ENCODE measurements at regions of chr5 and their contacts with region 1.

Region 1: DNA sequence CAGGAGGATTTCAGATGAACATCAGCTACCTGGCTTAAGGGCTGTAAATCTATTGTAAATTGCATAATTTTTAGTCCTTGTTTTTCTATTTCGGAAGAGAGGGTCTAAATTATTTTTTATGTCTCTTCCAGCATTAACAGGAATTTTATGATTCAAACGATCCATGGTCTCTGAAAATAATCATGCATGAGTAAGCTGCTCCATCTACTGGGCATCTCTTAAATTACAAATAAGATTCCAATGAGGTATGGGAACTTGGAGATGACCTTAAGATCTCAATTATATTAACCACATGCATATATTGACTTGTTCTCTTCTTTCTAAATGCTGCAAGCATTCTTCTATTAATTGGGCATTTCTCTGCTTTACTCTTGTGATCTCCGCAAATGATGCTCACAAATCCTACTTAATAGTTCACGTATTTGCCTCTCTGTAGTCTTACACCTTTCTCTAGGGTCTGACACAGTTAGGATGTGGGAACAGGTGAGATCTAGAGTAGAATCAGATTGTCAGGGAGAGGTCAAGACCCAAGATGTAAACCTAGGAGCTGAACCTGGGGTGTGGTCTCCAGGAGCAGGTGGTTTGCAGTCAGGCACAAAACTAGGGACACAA is 86.9 kb downstream of the NUDT12 start:
- DNase-seq: peak in 2 of 9 experiments; percentile 33 to 44
- ATAC-seq: no peak
- H3K4me3 ChIP-seq: no peak overlapping the region
- H3K4me3 Mint-ChIP-seq: no peak overlapping the region
- H3K27ac ChIP-seq: no peak overlapping the region
- H3K27ac Mint-ChIP-seq: no peak overlapping the region
- H3K4me1 ChIP-seq: no peaks in the 10 kb centered on the region
- H3K4me1 Mint-ChIP-seq: no peaks in the 10 kb centered on the region
- H3K27me3 ChIP-seq: no peaks in the 10 kb centered on the region
- H3K27me3 Mint-ChIP-seq: peaks cover 11% of the 10 kb centered on the region
- CTCF ChIP-seq: peak; percentile 57

Region 2: DNA sequence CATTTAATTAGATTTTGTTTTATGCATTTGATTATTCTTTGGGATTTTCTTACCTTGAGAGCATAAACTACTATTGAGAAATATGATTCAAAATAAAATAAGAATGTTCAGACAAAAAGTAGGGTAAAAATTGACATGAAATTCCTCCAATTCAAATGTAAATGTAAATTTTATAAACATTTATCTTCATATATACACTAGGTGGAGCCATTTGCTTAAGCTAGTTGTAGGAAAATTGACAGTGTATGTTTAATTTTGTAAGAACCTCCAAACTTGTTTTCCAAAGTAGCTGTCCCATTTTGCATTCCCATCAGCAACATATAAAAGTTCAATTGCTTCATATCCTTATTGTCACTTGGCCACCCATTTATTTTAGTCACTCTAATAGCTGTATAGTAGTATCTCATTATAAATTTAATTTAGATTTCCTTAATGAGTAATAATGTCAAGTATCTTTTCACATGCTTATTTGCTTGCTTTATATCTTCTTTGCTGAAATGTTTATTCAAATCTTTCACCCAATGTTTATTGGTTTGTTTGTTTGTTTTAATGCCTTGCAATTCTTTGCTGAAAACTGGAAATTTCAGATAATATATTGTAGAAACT is 939.3 kb before region 1 on chr5:
- CTCF ChIA-PET with region 1: no interaction called
- POLR2A ChIA-PET with region 1: no interaction called
- intact Hi-C with region 1: loop called in 1 of 2 experiments (anchors 1 kb)
- DNase-seq: peak in 2 of 9 experiments; percentile 1 to 14
- ATAC-seq: no peak
- H3K4me3 ChIP-seq: no peak overlapping the region
- H3K4me3 Mint-ChIP-seq: no peak overlapping the region
- H3K27ac ChIP-seq: no peak overlapping the region
- H3K27ac Mint-ChIP-seq: no peak overlapping the region
- H3K4me1 ChIP-seq: no peaks in the 10 kb centered on the region
- H3K4me1 Mint-ChIP-seq: no peaks in the 10 kb centered on the region
- H3K27me3 ChIP-seq: no peaks in the 10 kb centered on the region
- H3K27me3 Mint-ChIP-seq: peaks cover 2% of the 10 kb centered on the region
- CTCF ChIP-seq: peak; percentile 28

Region 3: DNA sequence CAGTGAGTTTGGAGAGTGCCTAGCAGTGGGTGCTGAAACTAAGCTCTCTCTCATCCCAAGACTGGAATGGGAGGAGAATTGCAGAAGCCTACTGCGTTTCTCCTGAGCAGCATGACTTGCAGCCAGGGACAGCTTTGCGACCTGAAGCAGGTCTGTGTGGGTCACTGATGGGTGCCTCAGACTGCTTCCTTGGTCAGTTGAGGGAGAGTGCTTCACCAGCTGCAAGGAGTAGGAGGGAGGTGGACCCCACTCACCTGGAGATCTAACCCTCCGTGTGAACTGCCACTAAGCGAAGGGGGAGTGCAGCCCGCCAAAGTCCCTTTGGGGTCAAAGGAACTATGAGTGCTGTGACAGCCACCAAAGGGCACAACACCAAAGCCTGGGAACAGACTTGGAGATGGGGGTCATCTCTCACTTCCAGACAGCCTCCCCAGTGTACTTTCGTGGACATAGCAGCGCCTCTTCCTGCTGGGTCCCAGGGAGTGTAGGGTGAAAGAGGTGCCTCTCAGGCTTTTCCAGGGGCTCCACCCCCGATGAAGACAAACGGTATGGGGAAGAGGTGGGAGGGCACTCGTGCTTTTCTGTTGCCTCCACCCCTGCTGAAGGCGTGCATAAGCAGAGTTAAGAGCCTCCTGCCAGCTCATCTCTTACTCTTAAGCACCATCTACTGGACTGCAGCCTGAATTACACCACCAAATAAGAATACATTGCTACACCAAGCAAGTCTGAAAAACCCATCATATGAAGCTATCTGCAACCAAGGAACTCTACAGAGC is 251.4 kb before region 1 on chr5:
- CTCF ChIA-PET with region 1: interaction called, 11 read pairs
- POLR2A ChIA-PET with region 1: no interaction called
- intact Hi-C with region 1: no loop called
- DNase-seq: peak in 8 of 9 experiments; percentile 1 to 70 (median 36)
- ATAC-seq: peak; percentile 99
- H3K4me3 ChIP-seq: no peak overlapping the region
- H3K4me3 Mint-ChIP-seq: no peak overlapping the region
- H3K27ac ChIP-seq: no peak overlapping the region
- H3K27ac Mint-ChIP-seq: no peak overlapping the region
- H3K4me1 ChIP-seq: no peaks in the 10 kb centered on the region
- H3K4me1 Mint-ChIP-seq: no peaks in the 10 kb centered on the region
- H3K27me3 ChIP-seq: no peaks in the 10 kb centered on the region
- H3K27me3 Mint-ChIP-seq: peaks cover 15% of the 10 kb centered on the region
- CTCF ChIP-seq: peak; percentile 70

Region 4: DNA sequence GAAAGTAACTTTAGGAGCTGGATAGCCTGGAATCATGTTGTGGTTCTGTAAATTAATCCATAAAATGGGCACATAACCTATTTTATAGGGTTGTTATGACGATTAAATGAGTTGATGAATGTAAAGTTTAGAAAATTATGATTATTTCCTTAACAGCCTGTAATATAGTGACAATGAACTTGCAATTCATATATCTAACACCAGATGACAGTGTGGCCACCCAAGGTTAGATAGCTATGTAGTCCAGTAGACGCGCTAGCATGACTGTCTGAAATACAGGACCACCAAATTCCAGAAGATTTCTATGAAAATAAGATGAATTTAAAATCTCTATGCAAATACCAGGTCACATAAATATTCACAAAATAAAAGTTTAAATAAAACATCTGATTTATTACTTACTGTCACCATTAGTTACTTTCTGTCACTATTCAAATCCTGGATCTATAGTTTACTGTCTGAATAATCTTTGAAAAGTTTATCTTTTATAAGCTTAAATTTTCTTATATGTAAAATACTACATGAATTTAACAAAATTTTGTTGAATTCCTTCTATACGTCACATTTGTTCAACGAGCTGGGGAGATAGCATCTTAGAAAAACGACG is 243.2 kb before region 1 on chr5:
- CTCF ChIA-PET with region 1: interaction called, 50 read pairs
- POLR2A ChIA-PET with region 1: interaction called, 3 read pairs
- intact Hi-C with region 1: loop called (anchors 1 kb)
- DNase-seq: peak in 3 of 9 experiments; percentile 17 to 60 (median 49)
- ATAC-seq: peak; percentile 79
- H3K4me3 ChIP-seq: no peak overlapping the region
- H3K4me3 Mint-ChIP-seq: no peak overlapping the region
- H3K27ac ChIP-seq: no peak overlapping the region
- H3K27ac Mint-ChIP-seq: no peak overlapping the region
- H3K4me1 ChIP-seq: no peaks in the 10 kb centered on the region
- H3K4me1 Mint-ChIP-seq: no peaks in the 10 kb centered on the region
- H3K27me3 ChIP-seq: no peaks in the 10 kb centered on the region
- H3K27me3 Mint-ChIP-seq: peaks cover 9% of the 10 kb centered on the region
- CTCF ChIP-seq: peak; percentile 85

Region 5: GRCh38 chr5:103486739-103487138 is 11.0 kb after region 1 on chr5:
- CTCF ChIA-PET with region 1: interaction called, 13 read pairs
- POLR2A ChIA-PET with region 1: no interaction called
- intact Hi-C with region 1: no loop called
- DNase-seq: no peak
- ATAC-seq: no peak
- H3K4me3 ChIP-seq: no peak overlapping the region
- H3K4me3 Mint-ChIP-seq: no peak overlapping the region
- H3K27ac ChIP-seq: no peak overlapping the region
- H3K27ac Mint-ChIP-seq: no peak overlapping the region
- H3K4me1 ChIP-seq: no peaks in the 10 kb centered on the region
- H3K4me1 Mint-ChIP-seq: no peaks in the 10 kb centered on the region
- H3K27me3 ChIP-seq: no peaks in the 10 kb centered on the region
- H3K27me3 Mint-ChIP-seq: peaks cover 6% of the 10 kb centered on the region
- CTCF ChIP-seq: no peak

Region 6: DNA sequence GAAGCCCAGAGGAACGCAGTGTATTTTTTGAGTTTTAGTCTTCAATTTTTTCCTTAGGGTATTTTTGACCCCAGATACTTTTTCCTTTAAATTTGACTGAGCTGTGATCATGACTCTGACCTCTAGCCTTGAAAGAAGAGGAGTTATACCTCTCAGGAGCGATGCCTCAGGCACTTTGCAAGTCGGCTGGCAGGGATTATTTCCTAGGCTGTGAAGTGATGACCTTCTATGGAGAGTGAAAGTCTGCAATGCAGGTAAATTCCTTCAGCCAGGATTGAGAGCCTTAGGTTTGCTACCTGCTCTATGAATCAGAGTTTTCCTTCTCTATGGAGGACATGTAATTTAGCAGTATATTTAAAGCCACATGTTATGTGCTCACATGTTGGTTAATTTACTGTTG is 97.7 kb after region 1 on chr5:
- CTCF ChIA-PET with region 1: no interaction called
- POLR2A ChIA-PET with region 1: no interaction called
- intact Hi-C with region 1: no loop called
- DNase-seq: no peak
- ATAC-seq: no peak
- H3K4me3 ChIP-seq: no peak overlapping the region
- H3K4me3 Mint-ChIP-seq: no peak overlapping the region
- H3K27ac ChIP-seq: no peak overlapping the region
- H3K27ac Mint-ChIP-seq: no peak overlapping the region
- H3K4me1 ChIP-seq: no peaks in the 10 kb centered on the region
- H3K4me1 Mint-ChIP-seq: no peaks in the 10 kb centered on the region
- H3K27me3 ChIP-seq: no peaks in the 10 kb centered on the region
- H3K27me3 Mint-ChIP-seq: peaks cover 10% of the 10 kb centered on the region
- CTCF ChIP-seq: no peak

Measured in CD8-positive, alpha-beta T cell (primary cell).